ENCODE measurements at regions of chr11 and their contacts with region 1.

Region 1: DNA sequence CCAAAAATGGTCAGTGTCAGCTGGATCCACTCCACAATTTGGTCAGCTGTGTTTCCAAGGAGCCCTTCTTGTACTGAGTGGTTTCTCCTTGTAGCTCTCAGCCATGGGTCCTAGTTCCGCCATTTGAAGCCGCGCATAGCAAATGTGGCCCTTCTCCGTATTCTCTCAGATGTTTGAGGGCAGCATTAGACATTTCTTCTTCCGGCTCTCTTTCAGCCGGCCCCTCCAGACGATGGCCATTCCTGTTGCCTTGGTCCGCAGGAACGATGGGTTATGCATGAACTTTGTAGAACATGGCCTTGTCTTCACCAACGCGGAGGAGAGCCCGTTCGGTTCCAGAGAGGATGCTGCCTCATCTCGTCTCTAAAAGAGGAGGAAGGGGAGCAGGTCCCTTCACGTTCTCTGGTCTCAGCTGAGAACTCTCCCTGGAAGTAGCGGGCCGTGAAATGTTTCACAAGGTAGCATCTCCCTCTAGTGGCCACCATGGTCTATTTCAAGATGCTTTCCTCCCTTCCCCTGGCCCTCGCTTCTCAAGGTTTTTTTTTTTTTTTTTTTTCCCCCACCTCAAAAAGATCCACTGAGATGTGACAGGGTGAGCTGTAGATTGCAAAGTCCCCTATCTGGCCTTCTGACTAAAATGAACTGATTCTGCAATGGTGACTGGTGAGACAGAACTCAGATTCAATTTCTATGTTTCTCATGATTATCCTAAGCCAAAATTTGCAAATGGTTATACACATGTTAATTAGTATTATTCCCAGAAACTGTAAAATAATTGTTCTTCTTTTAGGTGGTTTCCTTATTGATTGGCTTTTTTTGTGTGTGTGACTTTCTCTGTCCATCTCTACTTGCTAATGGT is 19.8 kb upstream of the PLET1 start:
- DNase-seq: peak; percentile 58
- ATAC-seq: peak; percentile 93 to 94

Region 2: DNA sequence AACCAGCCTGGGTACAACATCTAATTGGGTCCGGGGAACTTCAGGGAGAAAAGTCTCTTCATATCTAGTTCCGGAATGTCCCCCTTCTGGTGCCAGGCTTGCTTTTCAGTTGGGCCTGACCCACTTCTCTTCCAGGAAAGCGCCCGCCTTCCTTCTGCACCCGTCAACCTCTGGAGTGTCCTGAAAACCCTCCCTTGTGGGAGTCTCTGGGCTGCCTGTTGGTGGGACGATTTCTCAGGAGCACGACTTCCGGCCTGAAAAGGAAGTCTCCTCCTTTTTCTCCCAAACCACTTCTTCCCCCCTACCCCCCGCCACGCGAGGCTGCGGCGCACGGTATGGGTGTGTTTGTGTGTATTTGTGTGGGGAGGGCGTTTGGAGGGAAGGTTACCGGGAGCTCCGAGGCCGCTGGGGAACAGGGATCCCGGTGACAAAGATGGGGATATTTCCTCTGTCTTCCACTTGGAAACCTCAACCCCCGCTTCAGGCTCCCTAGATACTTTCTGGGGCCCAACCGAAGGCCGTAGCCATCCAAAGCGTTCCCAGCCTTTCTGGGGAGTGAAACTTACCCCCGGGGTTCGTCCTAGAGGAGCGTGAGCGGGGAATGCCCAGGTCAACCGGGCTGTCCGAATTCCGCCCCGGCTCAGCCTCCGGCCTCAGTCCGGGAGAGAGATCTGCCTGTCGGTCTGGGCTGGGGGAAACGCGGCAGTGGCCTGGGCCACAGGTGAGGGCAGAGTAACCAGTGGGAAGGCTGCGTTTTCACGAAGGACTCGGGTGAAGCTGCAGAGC is 206.3 kb before region 1 on chr11 and contains the start of gene NKAPD1:
- intact Hi-C with region 1: no loop called
- DNase-seq: peak; percentile 83
- ATAC-seq: peak; percentile 92 to 94
- total RNA-seq, gene NKAPD1: 6.7 to 10.4 TPM

Region 3: DNA sequence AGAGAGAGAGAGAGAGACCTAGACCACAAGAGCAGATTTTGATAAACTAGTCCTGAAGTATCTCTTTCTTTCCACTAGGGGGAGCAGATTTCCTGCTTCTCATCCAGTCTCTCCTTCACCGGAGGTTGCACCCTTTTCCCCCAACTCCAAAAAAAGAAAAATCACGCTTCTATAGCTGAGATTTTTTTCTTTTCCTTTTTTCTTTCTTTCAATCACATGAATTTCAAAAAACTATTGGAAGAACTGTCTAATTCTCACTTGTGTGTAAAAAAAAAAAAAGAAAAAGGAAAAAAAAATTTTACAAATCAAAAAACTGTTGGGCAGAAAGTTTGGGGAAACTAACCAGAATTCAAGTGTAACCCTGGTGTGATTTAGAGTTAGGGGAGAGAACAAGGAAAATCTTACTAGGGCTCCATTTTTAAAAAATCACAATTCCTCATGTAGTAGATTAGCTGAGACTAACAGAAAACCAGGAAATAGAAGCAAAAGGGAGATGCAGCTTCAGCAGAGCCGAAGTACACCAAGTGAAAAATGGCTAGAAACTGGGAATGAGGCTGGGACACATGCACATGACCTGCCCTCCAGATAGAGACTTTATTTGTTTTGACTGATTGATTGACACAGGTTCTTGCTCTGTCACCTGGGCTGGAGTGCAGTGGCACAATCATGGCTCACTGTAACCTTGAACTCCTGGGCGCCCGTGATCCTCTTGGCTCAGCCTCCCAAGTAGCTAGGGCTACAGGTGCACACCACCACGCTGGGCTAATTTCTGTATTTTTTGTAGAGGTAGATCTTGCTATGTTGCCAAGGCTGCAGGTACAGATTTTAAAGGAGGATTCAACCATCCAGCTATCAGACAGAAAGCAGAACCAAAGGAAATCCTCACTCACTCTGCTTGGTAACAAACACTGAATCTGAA is 166.7 kb before region 1 on chr11:
- intact Hi-C with region 1: loop called in 1 of 2 experiments (anchors 5 kb)
- DNase-seq: no peak
- ATAC-seq: peak; percentile 72 to 79

Region 4: DNA sequence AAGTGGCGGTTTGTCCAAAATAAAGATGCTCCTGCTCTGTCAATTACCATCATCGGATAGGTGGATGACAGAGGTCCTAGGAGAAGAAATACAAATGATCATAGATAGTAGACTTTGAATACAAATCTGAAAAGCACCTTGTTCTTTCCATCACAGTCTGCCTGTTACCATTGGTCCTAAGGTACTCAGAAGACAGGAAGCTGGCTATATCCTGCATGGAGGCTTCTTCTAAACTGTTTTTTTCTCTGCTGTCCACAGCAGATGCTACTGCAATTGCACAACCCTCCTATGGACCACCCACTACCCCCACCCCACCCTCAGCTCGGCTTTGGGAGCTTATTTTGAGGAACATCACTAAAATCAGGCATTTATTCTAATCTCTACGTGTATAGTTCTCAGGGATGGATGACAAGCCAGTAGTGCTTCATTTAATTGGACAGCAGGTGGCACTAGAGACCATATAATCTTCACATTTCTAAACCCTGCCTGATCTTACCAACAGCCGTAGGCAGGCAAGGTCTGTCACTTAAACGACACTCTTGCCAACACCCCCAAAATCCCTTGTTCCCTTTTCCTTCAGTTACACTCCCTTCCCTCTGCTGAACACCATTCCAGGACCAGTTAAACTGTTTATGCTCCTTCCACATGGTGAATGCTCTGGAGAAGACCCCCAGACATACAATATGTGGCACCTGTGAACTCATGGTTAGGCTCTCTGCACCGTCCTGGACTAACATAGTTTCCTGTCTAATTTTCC is 60.8 kb before region 1 on chr11:
- intact Hi-C with region 1: loop called (anchors 1 to 5 kb)
- DNase-seq: no peak
- ATAC-seq: peak; percentile 88 to 92

Region 5: DNA sequence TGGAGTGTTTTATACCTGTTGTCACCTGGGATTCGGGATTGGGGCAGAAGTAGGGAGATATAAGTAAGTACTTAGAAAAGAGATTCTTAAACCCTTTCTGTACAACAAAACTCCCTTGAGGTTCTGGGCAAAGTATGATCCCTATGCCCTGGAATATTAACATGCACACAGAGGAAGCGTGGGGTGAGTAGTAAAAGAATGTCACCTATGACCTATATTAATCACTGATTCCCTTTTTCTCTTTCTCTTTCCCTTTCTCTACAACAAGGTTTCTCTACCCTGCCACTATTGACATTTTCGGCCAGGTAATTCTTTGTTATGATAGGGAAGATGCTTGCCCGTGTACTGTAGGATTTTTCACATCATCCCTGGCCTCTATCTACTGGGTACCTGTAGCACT is 189.9 kb after region 1 on chr11:
- intact Hi-C with region 1: no loop called
- DNase-seq: no peak
- ATAC-seq: no peak

Region 6: DNA sequence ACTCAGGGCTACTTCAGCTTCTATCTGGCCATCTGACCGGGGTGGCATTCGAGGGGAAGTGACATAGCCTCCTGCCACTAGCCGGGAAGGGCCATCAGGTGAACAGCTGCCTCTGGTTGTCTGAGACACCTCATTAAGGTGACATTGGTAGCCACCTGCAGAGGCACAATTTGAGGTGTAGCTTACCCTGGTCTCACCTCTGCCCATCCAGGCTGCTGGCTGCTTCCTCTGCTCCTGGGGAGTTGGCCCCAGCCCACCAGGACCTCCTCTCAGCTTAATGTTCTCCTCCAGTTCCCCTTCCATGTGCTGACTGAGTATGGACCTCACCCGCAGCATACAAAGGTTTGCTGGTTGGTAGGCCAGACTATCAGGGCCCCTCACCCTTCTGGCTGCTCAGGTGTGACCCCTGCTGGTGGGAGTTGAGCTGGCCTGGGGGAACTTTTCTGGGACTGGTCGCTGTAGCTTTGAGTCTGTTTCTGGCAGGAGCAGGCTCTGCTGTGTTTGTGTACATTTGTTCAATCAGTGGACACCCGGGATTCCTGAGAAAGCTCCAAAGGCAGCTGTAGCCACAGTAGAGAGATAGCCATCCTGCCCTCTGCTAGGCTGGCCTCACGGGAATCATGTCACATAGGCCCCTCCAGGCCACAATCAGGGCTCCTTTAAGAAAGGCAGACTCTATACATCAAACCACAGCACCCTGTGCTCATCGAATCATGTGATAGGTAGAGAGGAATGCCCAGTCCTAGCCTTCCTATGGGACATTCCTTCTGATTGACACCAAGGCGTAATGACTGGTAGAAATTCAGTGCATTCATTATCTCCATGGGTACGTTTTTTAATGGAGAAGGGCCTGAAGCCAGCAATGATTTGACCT is 275.2 kb after region 1 on chr11:
- intact Hi-C with region 1: loop called in 1 of 2 experiments (anchors 10 kb)
- DNase-seq: peak; percentile 57
- ATAC-seq: peak; percentile 83 to 85

Region 7: GRCh38 chr11:113289431-113290187 is 1009.1 kb after region 1 on chr11:
- intact Hi-C with region 1: loop called (anchors 10 kb)
- DNase-seq: peak; percentile 46
- ATAC-seq: peak; percentile 72 to 87